ENCODE measurements at regions of chr1 and their contacts with region 1.

Region 1: DNA sequence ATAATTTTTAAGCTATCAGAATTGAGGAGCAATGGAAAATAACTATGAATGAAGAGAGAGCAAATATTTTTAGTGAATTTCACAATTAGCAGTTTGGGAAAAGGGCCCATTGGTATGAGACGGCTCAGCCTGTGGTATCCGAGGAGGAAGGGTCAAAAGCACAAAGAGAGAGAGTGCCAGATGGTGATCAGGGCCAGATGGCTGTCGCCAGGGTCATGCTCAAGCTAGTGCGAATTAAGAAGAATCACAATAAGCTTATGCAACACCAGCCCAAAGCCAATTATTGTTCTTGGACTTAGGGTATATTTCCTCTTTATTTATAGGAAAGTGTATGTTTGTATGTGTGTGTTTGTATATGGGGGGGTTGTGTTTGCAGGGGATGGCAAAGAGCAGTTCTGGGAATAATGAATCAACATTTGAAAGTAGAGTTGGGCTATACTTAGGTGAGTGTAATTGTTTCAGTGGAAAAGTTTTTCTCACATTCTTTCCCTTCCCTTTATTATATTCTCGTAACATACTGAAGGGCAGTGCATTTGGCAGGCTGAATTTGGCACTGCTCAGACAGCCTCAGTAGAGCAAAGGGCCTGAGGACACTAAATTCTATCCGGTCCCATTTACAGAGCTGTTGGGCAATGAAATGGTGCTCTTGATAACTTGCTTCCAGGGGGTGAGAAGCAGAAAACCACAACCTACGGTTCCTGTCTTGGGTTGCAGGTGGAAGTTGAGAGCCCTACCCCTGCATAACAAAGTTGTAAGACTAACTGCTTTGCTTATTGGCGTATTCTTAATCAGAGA is 19.5 kb upstream of the DDR2 start:
- DNase-seq: no peak
- H3K4me3 ChIP-seq: no peak overlapping the region
- H3K27me3 ChIP-seq: no peaks in the 10 kb centered on the region
- CTCF ChIP-seq: no peak

Region 2: DNA sequence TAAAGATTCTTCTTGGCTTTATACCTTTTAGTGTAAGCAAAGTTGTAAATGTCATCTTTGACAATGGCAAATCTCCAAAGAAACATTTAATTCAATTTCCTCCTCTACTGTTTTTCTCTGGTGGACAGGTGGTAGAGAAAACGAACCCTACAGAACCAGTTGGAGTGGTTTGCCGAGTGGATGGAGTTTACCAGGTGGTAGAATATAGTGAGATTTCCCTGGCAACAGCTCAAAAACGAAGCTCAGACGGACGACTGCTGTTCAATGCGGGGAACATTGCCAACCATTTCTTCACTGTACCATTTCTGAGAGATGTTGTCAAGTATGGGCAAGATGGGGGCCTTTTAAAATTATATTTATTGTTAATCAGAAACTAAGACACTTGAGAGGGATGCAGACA is 25.5 kb before region 1 on chr1:
- CTCF ChIA-PET with region 1: no interaction called
- POLR2A ChIA-PET with region 1: no interaction called
- DNase-seq: no peak
- H3K4me3 ChIP-seq: no peak overlapping the region
- H3K27me3 ChIP-seq: no peaks in the 10 kb centered on the region
- CTCF ChIP-seq: no peak

Region 3: DNA sequence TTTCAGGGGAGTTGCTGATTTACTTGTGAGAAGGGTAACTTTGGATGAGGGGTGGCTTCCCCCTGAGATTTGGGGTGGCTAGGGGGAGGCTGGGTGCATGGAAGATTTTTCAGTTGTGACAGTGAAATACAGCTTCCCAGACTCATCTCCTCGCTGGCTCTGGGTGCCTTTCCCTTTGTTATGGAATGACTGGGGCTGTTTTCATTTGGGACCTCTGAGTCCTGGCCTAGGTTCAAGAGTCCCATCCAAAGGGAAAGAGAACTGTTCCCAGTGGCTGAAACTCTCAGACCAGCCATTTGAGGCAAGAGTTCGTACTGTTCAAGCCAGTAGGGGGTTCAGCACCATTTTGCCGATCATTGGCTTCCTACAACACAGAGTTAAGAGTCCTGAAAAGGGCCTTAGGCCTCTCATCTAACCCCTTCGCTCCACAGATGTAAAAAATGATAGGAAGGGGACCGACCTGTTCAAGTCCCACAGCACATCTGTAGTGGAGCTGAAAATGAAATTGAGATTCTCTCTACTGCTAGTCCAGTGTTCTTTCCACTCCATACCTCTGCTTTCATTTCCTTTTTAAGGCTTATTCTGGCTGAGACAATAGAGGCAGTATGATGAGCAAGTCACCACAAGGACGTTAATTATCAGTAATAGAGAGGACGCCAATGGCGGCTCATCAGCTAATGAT is 20.4 kb after region 1 on chr1:
- CTCF ChIA-PET with region 1: interaction called, 14 read pairs
- POLR2A ChIA-PET with region 1: no interaction called
- DNase-seq: no peak
- H3K4me3 ChIP-seq: peak overlapping the region; percentile 69
- H3K27me3 ChIP-seq: no peaks in the 10 kb centered on the region
- CTCF ChIP-seq: peak; percentile 26; the same call in 1 of the 2 replicates

Region 4: DNA sequence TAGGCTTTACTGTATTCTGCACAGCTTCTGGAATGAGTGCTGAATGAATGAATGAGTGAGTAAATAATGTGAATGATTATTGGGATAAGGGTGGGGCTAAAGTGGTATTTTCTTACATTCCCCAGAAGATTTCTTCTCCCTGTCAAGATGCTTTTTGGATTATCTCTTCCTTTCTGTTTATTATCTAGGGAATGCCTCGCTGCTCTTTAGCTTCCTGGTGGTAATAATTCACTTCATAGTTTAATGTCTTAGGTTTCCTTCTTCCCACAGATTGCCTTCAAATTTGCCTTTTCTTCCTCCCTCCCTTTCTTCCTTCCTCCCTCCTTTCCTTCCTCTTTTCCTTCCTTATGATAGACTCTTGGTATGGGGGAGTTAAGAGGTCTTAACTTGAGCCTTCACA is 43.5 kb after region 1 on chr1:
- CTCF ChIA-PET with region 1: no interaction called
- POLR2A ChIA-PET with region 1: no interaction called
- DNase-seq: no peak
- H3K4me3 ChIP-seq: no peak overlapping the region
- H3K27me3 ChIP-seq: no peaks in the 10 kb centered on the region
- CTCF ChIP-seq: no peak

Region 5: GRCh38 chr1:162756523-162756922 is 143.7 kb after region 1 on chr1:
- CTCF ChIA-PET with region 1: interaction called, 11 read pairs
- POLR2A ChIA-PET with region 1: no interaction called
- DNase-seq: no peak
- H3K4me3 ChIP-seq: no peak overlapping the region
- H3K27me3 ChIP-seq: no peaks in the 10 kb centered on the region
- CTCF ChIP-seq: no peak

Region 6: DNA sequence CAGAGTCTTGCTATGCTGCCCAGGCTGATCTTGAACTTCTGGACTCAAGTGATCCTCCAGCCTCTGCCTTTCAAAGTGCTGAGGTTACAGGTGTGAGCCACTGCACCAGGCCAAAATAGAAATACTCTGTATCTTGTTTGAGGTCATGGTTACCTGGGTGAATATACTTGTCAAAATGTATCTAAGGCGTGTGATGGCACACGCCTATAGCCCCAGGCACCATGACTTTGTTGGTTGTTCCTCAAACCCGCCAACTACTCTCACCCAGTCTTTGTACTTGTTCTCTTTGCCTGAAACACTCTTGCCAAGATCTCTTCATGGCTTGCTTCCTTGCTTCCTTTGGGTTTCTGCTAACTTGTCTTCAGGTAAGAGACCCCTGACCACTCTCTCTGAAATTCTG is 627.9 kb after region 1 on chr1:
- CTCF ChIA-PET with region 1: no interaction called
- POLR2A ChIA-PET with region 1: no interaction called
- DNase-seq: no peak
- H3K4me3 ChIP-seq: no peak overlapping the region
- H3K27me3 ChIP-seq: no peaks in the 10 kb centered on the region
- CTCF ChIP-seq: no peak

Region 7: DNA sequence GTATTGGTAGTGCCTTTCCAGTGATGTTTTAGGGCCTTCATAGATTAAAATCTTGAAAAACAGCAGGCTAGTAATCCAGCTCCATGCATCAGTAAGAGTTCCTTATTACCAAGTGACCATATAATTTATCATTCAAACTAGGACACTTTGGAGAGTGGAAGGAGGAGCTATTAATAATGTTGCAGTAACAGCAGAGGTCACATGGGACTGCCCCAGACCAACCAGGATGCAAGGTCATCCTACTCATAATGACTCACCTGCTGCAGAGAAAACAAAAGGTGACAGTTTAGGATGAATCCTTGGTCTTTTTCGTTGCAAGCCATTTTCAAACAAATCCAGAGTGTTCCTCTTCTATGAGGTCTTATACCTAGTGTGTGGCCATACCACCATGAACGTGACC is 896.3 kb after region 1 on chr1:
- CTCF ChIA-PET with region 1: no interaction called
- POLR2A ChIA-PET with region 1: no interaction called
- DNase-seq: no peak
- H3K4me3 ChIP-seq: no peak overlapping the region
- H3K27me3 ChIP-seq: no peaks in the 10 kb centered on the region
- CTCF ChIP-seq: no peak